ENCODE measurements at regions of chr16 and their contacts with region 1.

Region 1: DNA sequence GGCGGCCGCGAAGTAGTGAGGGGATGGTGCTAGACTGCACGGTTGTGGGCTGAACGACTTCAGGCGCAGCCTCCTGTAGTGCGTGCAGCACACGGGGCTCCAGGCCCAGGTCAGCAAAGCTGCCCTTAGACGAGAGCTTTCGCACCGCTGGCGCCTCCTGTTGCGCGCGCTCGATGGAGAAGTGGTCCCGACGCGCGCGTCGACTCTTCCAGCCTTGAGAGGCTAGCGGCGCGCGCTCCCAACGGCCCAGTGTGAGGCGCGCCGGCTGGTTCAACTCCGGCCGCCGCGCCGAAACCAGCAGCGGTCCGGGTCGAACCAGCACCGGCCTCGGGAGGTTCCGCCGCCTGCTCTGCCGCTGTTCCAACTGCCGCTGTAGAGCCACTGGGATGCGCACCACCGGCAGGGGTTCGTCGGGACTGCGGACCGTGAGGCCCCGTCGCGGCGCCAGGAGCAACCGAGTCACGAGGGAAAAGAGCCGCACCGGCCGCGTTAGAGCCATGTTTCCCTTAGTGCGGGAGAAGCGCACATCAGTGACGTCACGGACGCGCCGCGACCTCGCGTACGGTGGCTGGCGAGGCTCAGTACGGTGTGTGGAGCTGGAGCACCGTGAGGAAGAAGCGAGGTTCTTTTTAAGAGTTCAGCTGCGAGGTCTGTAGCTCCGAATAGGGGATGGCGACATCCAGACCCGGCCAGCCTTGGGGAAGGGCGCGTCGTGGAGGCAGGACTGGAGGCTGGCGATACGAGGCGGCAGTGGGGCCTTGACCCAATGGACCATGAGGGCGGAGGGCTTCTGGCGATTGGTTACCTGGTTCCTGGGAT is at the starts of genes DDX28 and DUS2:
- DNase-seq: peak; percentile 83
- ATAC-seq: peak; percentile 94
- H3K4me3 ChIP-seq: peak within 1 kb of the TSS; percentile 99
- H3K27ac ChIP-seq: peak within 1 kb of the TSS; percentile 87
- H3K4me1 ChIP-seq: peaks cover 11% of the 10 kb centered on the region
- H3K27me3 ChIP-seq: no peaks in the 10 kb centered on the region
- CTCF ChIP-seq: peak in 1 of 3 experiments; percentile 16; a peak in 1 of 6 replicates
- EP300 ChIP-seq: no peak
- POLR2A ChIP-seq: peak; percentile 97
- RAD21 ChIP-seq: no peak
- polyA plus RNA-seq, gene DDX28: 3.6 to 7.2 TPM
- polyA plus RNA-seq, gene DUS2: 4.8 to 7.8 TPM

Region 2: DNA sequence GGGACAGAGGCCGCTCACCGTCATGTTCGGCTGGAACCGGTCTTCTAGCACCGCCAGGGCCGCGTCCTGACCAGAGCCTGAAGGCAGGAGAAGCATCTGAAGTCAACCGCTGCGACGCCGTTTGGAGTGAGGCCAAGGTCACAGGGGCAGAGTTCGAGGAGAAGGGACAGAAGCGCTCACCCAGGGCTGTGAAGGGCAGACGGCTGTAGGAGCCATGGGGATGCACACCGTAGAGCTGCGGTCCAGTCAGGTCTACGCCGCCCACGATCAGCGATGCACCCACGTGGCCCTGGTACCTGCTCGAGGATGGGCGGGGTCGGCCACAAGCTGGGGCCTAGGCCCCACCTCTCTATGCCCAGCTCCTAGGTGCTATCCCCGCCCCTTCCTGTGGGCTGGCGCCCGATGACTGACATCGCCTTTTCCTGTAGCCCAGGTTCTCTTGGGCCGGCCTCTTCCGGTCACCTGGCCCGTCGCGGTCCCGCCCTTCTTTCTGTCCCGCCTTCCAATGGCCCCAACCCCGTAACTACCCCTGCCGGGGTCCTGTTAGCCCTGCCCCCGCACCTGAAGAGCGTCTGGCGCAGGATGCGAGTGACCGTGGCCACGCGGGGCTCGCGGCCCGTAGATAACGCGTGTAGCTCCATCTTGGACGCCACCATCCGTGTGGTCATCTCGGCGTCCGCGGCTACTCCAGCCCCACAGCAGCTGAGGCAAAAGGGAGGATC is 87.3 kb before region 1 on chr16:
- CTCF ChIA-PET with region 1: interaction called, 3 read pairs
- POLR2A ChIA-PET with region 1: interaction called, 4 read pairs
- RAD21 ChIA-PET with region 1: interaction called, 10 read pairs
- SMC1A ChIA-PET with region 1: interaction called, 3 read pairs
- in situ Hi-C with region 1: no loop called
- intact Hi-C with region 1: no loop called
- DNase-seq: peak; percentile 84
- ATAC-seq: peak; percentile 94
- H3K4me3 ChIP-seq: peak overlapping the region; percentile 89
- H3K27ac ChIP-seq: peak overlapping the region; percentile 98
- H3K4me1 ChIP-seq: peaks cover 12% of the 10 kb centered on the region
- H3K27me3 ChIP-seq: no peaks in the 10 kb centered on the region
- CTCF ChIP-seq: no peak
- EP300 ChIP-seq: no peak
- POLR2A ChIP-seq: peak; percentile 91
- RAD21 ChIP-seq: no peak

Region 3: DNA sequence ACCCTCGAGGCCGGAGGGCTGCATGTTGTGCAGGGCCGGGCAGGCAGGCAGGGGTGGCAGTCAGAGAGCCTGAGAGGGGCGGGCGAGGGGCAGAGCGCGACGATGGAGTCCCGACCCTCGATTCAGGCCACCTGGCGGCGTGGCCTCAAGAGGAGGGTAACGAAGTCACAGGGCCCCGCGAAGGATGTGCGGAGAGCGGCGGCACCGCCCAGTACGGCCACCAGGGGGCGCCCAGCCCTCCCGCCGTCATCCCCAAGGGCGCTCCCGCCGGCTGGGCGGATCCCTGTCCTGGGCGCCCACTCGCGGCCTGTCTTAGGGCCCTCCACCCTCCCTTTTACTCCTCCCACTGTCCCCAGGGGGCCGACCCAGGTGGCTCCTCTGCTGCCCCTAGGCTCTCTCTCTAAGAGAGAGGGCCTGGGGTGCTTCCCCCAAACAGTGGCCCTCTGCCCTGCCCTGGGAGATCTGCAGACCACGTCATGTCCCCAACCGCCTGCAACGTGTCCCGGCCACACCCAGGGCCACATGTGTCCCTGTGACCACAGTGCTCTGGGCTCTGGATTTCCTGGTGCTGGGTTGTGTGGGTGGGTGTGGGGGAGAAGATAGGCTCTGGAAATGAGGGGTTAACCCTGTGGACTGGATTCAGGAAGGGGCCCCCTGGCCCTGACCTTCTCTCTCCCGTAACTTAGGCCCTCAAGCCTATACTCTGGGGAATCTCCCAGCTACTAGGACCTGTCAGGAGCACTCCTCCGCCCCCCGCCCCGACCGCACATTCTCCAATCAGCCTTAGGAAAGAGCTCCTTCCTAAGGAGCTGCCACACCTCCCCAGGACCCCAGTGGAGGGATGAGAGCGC is 29.5 kb before region 1 on chr16:
- CTCF ChIA-PET with region 1: interaction called, 6 read pairs
- POLR2A ChIA-PET with region 1: interaction called, 3 read pairs
- RAD21 ChIA-PET with region 1: interaction called, 3 read pairs
- SMC1A ChIA-PET with region 1: interaction called, 3 read pairs
- in situ Hi-C with region 1: no loop called
- intact Hi-C with region 1: loop called (anchors 1 kb)
- DNase-seq: no peak
- ATAC-seq: peak; percentile 92
- H3K4me3 ChIP-seq: peak overlapping the region; percentile 24; the same call in 1 of the 2 replicates
- H3K27ac ChIP-seq: peak overlapping the region; percentile 64
- H3K4me1 ChIP-seq: peaks cover 39% of the 10 kb centered on the region
- H3K27me3 ChIP-seq: no peaks in the 10 kb centered on the region
- CTCF ChIP-seq: peak; percentile 92 to 95 (median 94)
- EP300 ChIP-seq: no peak
- POLR2A ChIP-seq: peak; percentile 70
- RAD21 ChIP-seq: peak; percentile 52

Region 4: GRCh38 chr16:68005786-68006286 is 17.1 kb before region 1 on chr16:
- CTCF ChIA-PET with region 1: interaction called, 4 read pairs
- POLR2A ChIA-PET with region 1: interaction called, 13 read pairs
- RAD21 ChIA-PET with region 1: interaction called, 3 read pairs
- SMC1A ChIA-PET with region 1: interaction called, 8 read pairs
- in situ Hi-C with region 1: no loop called
- intact Hi-C with region 1: no loop called
- DNase-seq: no peak
- ATAC-seq: peak; percentile 68
- H3K4me3 ChIP-seq: no peak overlapping the region
- H3K27ac ChIP-seq: no peak overlapping the region
- H3K4me1 ChIP-seq: peaks cover 4% of the 10 kb centered on the region; the same call in 1 of the 2 replicates
- H3K27me3 ChIP-seq: no peaks in the 10 kb centered on the region
- CTCF ChIP-seq: no peak
- EP300 ChIP-seq: no peak
- POLR2A ChIP-seq: no peak
- RAD21 ChIP-seq: no peak

Region 5: DNA sequence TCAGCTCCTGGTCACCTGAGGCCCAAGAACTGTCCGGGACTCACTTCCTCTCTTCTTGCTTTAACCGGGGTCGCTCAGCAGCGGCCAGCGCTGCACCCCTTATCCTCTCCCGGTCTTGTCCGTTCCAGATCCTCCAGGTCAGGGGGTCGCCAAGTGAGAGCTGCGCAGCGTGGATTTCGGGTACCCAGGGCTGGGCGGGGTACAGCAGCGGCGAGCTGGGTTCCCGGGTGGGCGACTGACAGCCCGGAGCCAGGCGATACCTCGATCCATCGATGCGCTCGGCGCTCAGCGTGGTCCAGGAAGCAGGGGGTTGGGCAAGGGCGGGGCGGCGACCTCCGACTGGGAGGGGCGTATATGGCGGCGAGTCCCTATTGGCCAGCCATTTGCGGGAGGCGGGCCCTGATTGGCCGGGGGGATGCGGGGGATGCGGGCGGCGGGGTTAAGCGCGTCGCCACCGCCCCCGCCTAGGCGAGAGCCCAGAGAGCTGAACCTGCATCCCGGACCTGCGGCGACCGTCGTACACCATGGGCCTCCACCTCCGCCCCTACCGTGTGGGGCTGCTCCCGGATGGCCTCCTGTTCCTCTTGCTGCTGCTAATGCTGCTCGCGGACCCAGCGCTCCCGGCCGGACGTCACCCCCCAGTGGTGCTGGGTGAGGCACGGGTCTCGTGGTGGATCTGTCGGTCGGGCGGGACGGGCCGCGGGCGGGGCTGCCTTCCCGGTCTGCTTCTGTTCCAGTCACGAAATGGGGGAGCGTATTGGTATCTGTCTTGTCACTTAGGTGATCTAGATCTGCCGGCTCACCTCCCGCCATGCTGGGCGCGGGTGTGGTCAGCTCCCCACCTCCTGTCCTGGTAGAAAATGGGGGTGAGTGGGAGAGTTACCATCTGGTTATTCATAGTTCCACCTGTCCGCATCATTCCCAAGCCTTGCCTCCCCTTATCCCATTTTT is 222.3 kb after region 1 on chr16 and contains the start of gene PLA2G15:
- CTCF ChIA-PET with region 1: no interaction called
- POLR2A ChIA-PET with region 1: interaction called, 10 read pairs
- RAD21 ChIA-PET with region 1: no interaction called
- SMC1A ChIA-PET with region 1: no interaction called
- in situ Hi-C with region 1: no loop called
- intact Hi-C with region 1: no loop called
- DNase-seq: no peak
- ATAC-seq: peak; percentile 98
- H3K4me3 ChIP-seq: peak within 1 kb of the TSS; percentile 97
- H3K27ac ChIP-seq: peak within 1 kb of the TSS; percentile 5; the same call in 1 of the 2 replicates
- H3K4me1 ChIP-seq: peaks cover 18% of the 10 kb centered on the region
- H3K27me3 ChIP-seq: no peaks in the 10 kb centered on the region
- CTCF ChIP-seq: no peak
- EP300 ChIP-seq: 0 out of 4 replicates have a peak, but pooled peaks of 1 of the 2 experiments have one; percentile 22
- POLR2A ChIP-seq: peak; percentile 87
- RAD21 ChIP-seq: no peak
- polyA plus RNA-seq, gene PLA2G15: 0.31 to 1.1 TPM

Measured in GM12878 (cell line).